ENCODE measurements at regions of chr12 and their contacts with region 1.

Region 1: DNA sequence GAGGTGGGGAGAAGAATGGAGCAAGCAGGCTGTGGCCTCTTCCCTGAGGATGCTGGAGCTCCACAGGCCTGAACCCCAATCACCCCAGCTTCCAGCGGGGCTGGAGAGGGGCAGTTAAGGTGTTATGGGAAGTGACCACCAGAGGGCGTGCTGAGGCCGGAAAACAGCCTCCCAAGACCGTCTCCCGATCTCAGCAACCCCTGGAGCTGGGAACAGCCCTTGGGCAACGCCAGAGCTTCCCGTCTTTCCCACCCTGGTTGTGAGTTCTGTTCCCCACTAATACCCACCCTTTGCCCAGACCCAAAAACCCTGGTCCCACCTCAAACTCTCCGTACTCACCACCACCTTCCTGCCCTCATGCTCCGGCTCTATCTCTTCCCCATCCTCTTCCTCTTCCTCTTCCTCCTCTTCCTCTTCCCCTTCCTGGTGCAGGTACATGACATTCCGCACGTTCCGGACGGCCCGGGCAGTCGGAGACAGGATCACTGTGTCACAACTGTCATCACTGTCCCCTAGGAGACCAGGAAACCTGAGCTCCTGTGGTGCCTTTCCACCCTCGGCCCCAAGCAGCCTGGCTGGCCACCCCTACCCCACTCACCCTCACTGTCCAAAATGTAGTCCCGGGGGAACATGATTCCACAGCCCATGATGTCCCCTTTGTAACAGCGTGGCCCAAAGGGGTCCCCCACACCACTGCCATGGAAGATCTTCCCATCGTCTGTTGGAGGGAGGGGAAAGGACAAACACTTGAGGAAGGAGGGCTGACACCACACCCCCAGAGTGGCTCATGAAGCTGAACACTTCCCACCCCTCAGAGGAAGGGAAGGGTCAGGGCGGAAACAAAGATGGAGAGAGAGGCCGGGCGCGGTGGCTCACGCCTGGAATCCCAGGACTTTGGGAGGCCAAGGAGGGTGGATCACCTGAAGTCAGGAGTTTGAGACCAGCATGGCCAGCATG is 12.9 kb downstream of the SPRYD3 start:
- DNase-seq: peak; percentile 78 to 87 (median 83)
- ATAC-seq: peak; percentile 40 to 71 (median 50)
- H3K4me3 ChIP-seq: peak overlapping the region in 1 of 12 donors; percentile 10
- H3K27ac ChIP-seq: peak overlapping the region in 11 of 12 donors; percentile 39 to 86 (median 71)
- H3K4me1 ChIP-seq: peaks cover 5 to 97% (median 75%) of the 10 kb centered on the region in 12 donors
- H3K27me3 ChIP-seq: no peaks in the 10 kb centered on the region
- CTCF ChIP-seq: peak; percentile 86 to 95 (median 91)
- POLR2A ChIP-seq: no peak

Region 2: DNA sequence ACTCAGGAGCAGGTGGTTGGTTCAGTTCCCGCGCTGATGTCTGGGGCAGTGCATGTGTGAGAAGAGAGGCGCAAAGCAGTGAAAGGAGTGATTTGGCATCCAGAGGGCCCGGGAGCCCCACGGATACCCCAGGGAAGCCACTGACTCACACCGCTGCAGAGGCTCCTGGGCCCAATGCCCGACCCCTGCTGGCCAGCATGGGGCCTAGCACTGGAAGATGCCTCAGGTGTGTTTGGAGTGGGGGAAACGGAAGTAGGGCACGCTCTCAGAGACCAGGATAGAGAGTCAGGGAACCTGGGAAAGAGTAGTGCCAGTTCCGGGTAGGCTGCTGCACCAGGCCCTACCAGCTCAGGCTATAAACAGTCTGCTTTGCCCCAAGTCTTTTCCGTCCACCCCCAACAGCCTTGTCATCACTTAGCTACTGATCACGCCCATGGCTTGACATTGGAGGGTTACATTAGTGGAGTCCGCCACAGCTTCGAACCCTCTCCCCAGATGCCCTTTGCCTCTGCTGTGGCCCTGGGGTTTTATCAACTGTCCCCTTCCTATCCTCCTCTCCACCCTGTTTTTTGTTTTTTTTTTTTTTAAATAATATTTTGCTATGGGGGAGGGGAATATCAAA is 124.0 kb after region 1 on chr12:
- intact Hi-C with region 1: loop called in 8 of 10 experiments (anchors 2 to 5 kb)
- DNase-seq: peak in 3 of 5 donors; percentile 64 to 76 (median 66)
- ATAC-seq: peak; percentile 52 to 83 (median 76)
- H3K4me3 ChIP-seq: no peak overlapping the region
- H3K27ac ChIP-seq: peak overlapping the region in 3 of 12 donors; percentile 8 to 64 (median 14)
- H3K4me1 ChIP-seq: peaks cover 0 to 8% (median 3%) of the 10 kb centered on the region in 12 donors
- H3K27me3 ChIP-seq: no peaks in the 10 kb centered on the region
- CTCF ChIP-seq: peak; percentile 54 to 81 (median 63)
- POLR2A ChIP-seq: no peak

Region 3: GRCh38 chr12:53198486-53199110 is 132.3 kb after region 1 on chr12:
- intact Hi-C with region 1: loop called in 9 of 10 experiments (anchors 1 to 5 kb)
- DNase-seq: no peak
- ATAC-seq: no peak
- H3K4me3 ChIP-seq: no peak overlapping the region
- H3K27ac ChIP-seq: peak overlapping the region in 1 of 12 donors; percentile 35
- H3K4me1 ChIP-seq: peaks cover 0 to 36% (median 6%) of the 10 kb centered on the region in 12 donors
- H3K27me3 ChIP-seq: no peaks in the 10 kb centered on the region
- CTCF ChIP-seq: no peak
- POLR2A ChIP-seq: no peak

Region 4: GRCh38 chr12:53287741-53288216 is 221.5 kb after region 1 on chr12:
- intact Hi-C with region 1: loop called in 1 of 10 experiments (anchors 5 kb)
- DNase-seq: peak; percentile 62 to 83 (median 71)
- ATAC-seq: peak; percentile 62 to 90 (median 84)
- H3K4me3 ChIP-seq: no peak overlapping the region
- H3K27ac ChIP-seq: no peak overlapping the region
- H3K4me1 ChIP-seq: no peaks in the 10 kb centered on the region
- H3K27me3 ChIP-seq: no peaks in the 10 kb centered on the region
- CTCF ChIP-seq: peak; percentile 52 to 81 (median 68)
- POLR2A ChIP-seq: no peak

Region 5: DNA sequence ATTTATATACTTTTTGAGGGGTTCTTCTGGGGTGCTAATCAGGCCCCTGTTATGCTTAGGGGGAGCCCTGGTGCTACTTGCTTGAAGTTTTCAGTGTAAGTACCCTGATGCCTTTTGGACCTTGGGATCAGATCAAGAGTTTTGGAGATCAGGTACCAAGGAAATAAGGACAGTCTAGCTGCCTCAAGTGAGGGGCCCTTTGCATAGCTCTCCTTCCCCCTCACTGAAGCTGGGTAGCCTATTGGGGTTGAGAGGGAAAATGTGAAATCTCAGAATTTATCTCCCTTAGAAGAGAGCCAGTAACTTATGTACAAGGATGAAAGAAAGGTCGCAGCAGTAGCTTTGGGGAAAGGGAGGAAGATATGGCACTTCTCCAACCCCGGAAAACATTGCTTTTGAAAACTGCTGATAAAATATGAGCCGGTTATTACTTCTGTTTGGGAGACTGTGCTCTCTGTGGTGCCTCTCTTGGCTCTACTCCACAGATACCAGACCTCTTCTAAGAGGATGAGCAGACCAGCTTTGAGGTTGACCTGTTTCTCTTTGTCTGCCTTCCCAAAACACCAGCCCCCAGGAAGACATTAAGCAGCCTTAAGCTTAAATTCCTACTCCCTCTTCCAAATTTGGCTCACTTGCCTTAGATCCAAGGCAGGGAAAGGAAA is 348.6 kb after region 1 on chr12:
- intact Hi-C with region 1: no loop called
- DNase-seq: no peak
- ATAC-seq: no peak
- H3K4me3 ChIP-seq: no peak overlapping the region
- H3K27ac ChIP-seq: peak overlapping the region in 3 of 12 donors; percentile 9 to 55 (median 20)
- H3K4me1 ChIP-seq: peaks cover 0 to 54% (median 28%) of the 10 kb centered on the region in 12 donors
- H3K27me3 ChIP-seq: no peaks in the 10 kb centered on the region
- CTCF ChIP-seq: no peak
- POLR2A ChIP-seq: no peak